Naive thymus-derived CD4-positive, alpha-beta T cell (primary cell): ENCODE measurements at regions of chr11 and their contacts with region 1.

Region 1: GRCh38 chr11:11841723-11842420 is at the start of gene USP47:
- DNase-seq: peak; percentile 90 to 98 (median 95)
- ATAC-seq: peak; percentile 90
- H3K4me3 ChIP-seq: peak within 1 kb of the TSS; percentile 76
- H3K4me3 Mint-ChIP-seq: peak within 1 kb of the TSS in 1 of 10 donors; percentile 59
- H3K27ac ChIP-seq: peak within 1 kb of the TSS; percentile 100
- H3K27ac Mint-ChIP-seq: peak within 1 kb of the TSS in 1 of 9 donors; percentile 64
- H3K4me1 ChIP-seq: peaks cover 27 to 36% of the 10 kb centered on the region in 2 donors
- H3K4me1 Mint-ChIP-seq: peaks cover 0 to 25% (median 3%) of the 10 kb centered on the region in 7 donors
- H3K27me3 ChIP-seq: no peaks in the 10 kb centered on the region
- H3K27me3 Mint-ChIP-seq: peaks cover 0 to 17% (median 13%) of the 10 kb centered on the region in 5 donors
- total RNA-seq, gene USP47: 45.6 to 71.8 (median 59.1) TPM

Region 2: GRCh38 chr11:10540923-10541560 is 1300.8 kb before region 1 on chr11 and contains the start of gene RNF141:
- CTCF ChIA-PET with region 1: no interaction called
- POLR2A ChIA-PET with region 1: no interaction called
- intact Hi-C with region 1: loop called in 1 of 2 experiments (anchors 5 kb)
- DNase-seq: peak; percentile 87 to 99 (median 94)
- ATAC-seq: peak; percentile 99
- H3K4me3 ChIP-seq: peak within 1 kb of the TSS; percentile 81
- H3K4me3 Mint-ChIP-seq: peak within 1 kb of the TSS; percentile 86 to 93 (median 90)
- H3K27ac ChIP-seq: peak within 1 kb of the TSS; percentile 90
- H3K27ac Mint-ChIP-seq: peak within 1 kb of the TSS; percentile 68 to 95 (median 86)
- H3K4me1 ChIP-seq: peaks cover 0 to 8% of the 10 kb centered on the region in 2 donors
- H3K4me1 Mint-ChIP-seq: peaks cover 9 to 37% (median 27%) of the 10 kb centered on the region in 7 donors
- H3K27me3 ChIP-seq: no peaks in the 10 kb centered on the region
- H3K27me3 Mint-ChIP-seq: no peaks in the 10 kb centered on the region
- total RNA-seq, gene RNF141: 11.9 to 22.7 (median 17.3) TPM

Region 3: DNA sequence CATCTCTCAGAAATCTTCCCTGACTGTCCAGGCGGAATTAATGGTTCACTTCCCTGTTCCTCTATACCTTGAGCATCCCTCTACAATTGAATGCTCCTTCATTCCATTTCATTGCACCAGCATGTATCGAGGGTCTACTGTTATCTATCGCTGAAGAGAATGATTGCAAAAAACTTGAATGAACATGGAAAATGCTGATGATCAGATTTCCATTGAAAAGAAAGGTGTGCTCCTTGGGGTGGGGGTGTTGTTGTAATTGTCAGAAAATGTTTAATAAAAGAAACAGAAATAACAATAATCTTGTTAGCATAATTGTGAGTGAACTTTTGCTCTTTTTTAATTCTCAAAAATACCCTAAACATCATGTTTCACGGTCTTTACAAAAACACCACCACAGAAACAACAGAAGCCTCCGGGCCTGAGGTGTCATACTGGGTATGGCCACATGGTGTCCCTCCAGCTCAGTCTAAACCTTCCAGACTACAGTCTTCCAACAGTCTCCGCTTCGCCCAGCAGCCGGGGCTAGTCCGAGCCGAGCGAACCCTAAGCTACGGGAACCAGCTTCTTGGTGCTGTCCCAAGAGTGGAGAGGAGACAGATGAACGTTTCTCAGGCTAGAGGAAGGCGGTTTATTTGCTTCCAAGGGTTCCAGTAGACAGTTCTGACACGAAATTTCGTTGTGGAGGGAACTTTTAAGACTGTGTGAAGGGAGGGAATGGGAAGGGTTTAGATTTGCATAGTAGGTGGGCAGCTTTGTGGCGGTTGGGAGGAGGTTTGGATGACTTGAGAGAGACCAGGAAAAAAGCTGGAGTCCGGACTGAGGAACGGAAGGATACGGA is 908.2 kb before region 1 on chr11:
- CTCF ChIA-PET with region 1: no interaction called
- POLR2A ChIA-PET with region 1: interaction called, 4 read pairs
- intact Hi-C with region 1: loop called in 1 of 2 experiments (anchors 5 kb)
- DNase-seq: peak; percentile 55 to 80 (median 74)
- ATAC-seq: peak; percentile 95
- H3K4me3 ChIP-seq: peak overlapping the region; percentile 62
- H3K4me3 Mint-ChIP-seq: peak overlapping the region; percentile 77 to 92 (median 90)
- H3K27ac ChIP-seq: no peak overlapping the region
- H3K27ac Mint-ChIP-seq: peak overlapping the region in 5 of 9 donors; percentile 12 to 77 (median 33)
- H3K4me1 ChIP-seq: peaks cover 0 to 6% of the 10 kb centered on the region in 2 donors
- H3K4me1 Mint-ChIP-seq: peaks cover 10 to 21% (median 17%) of the 10 kb centered on the region in 7 donors
- H3K27me3 ChIP-seq: peaks cover 3 to 5% of the 10 kb centered on the region in 2 donors
- H3K27me3 Mint-ChIP-seq: peaks cover 9 to 63% (median 29%) of the 10 kb centered on the region in 5 donors

Region 4: DNA sequence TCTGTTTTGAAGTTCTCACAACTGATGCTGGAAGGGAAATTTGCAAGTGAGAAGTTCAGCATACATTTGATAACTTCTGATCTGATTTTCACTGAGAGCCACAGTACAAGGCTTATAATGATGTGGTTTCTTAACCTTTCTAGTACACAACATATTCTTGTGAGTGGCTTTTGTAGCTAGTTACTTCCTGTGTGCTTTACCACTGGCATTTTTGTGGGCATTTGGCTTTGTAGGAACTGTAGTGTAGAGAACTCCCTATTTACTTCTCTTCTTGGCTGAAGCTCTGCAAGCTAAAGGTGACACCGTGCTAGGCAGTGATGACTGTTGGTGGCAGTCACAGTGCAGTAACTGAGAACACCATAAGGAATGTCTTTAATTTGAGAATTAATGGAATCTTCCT is 14.8 kb after region 1 on chr11:
- CTCF ChIA-PET with region 1: interaction called, 8 read pairs
- POLR2A ChIA-PET with region 1: interaction called, 24 read pairs
- intact Hi-C with region 1: loop called (anchors 1 to 2 kb)
- DNase-seq: peak in 7 of 9 donors; percentile 28 to 66 (median 44)
- ATAC-seq: peak; percentile 90
- H3K4me3 ChIP-seq: peak overlapping the region; percentile 28
- H3K4me3 Mint-ChIP-seq: peak overlapping the region; percentile 5 to 61 (median 46)
- H3K27ac ChIP-seq: peak overlapping the region; percentile 18
- H3K27ac Mint-ChIP-seq: peak overlapping the region in 8 of 9 donors; percentile 17 to 80 (median 44)
- H3K4me1 ChIP-seq: peaks cover 32 to 39% of the 10 kb centered on the region in 2 donors
- H3K4me1 Mint-ChIP-seq: peaks cover 41 to 90% (median 71%) of the 10 kb centered on the region in 7 donors
- H3K27me3 ChIP-seq: no peaks in the 10 kb centered on the region
- H3K27me3 Mint-ChIP-seq: no peaks in the 10 kb centered on the region

Region 5: GRCh38 chr11:12195768-12196167 is 353.9 kb after region 1 on chr11:
- CTCF ChIA-PET with region 1: no interaction called
- POLR2A ChIA-PET with region 1: no interaction called
- intact Hi-C with region 1: loop called in 1 of 2 experiments (anchors 10 kb)
- DNase-seq: peak in 8 of 9 donors; percentile 55 to 77 (median 70)
- ATAC-seq: peak; percentile 83
- H3K4me3 ChIP-seq: peak overlapping the region; percentile 41
- H3K4me3 Mint-ChIP-seq: peak overlapping the region; percentile 68 to 92 (median 81)
- H3K27ac ChIP-seq: peak overlapping the region; percentile 57
- H3K27ac Mint-ChIP-seq: peak overlapping the region; percentile 91 to 97 (median 94)
- H3K4me1 ChIP-seq: peaks cover 40 to 58% of the 10 kb centered on the region in 2 donors
- H3K4me1 Mint-ChIP-seq: peaks cover 50 to 89% (median 75%) of the 10 kb centered on the region in 7 donors
- H3K27me3 ChIP-seq: no peaks in the 10 kb centered on the region
- H3K27me3 Mint-ChIP-seq: no peaks in the 10 kb centered on the region

Region 6: GRCh38 chr11:13462901-13463778 is 1621.3 kb after region 1 on chr11 and contains the start of gene BTBD10:
- CTCF ChIA-PET with region 1: no interaction called
- POLR2A ChIA-PET with region 1: no interaction called
- intact Hi-C with region 1: loop called (anchors 2 to 5 kb)
- DNase-seq: peak; percentile 87 to 94 (median 91)
- ATAC-seq: peak; percentile 100
- H3K4me3 ChIP-seq: peak within 1 kb of the TSS; percentile 98
- H3K4me3 Mint-ChIP-seq: peak within 1 kb of the TSS; percentile 97 to 100 (median 99)
- H3K27ac ChIP-seq: peak within 1 kb of the TSS; percentile 96
- H3K27ac Mint-ChIP-seq: peak within 1 kb of the TSS; percentile 93 to 100 (median 97)
- H3K4me1 ChIP-seq: peaks cover 18 to 20% of the 10 kb centered on the region in 2 donors
- H3K4me1 Mint-ChIP-seq: peaks cover 22 to 54% (median 46%) of the 10 kb centered on the region in 7 donors
- H3K27me3 ChIP-seq: no peaks in the 10 kb centered on the region
- H3K27me3 Mint-ChIP-seq: peaks cover 0 to 5% (median 0%) of the 10 kb centered on the region in 5 donors
- total RNA-seq, gene BTBD10: 16.3 to 25.2 (median 19.4) TPM